Cardiac septum (tissue), 1 donor: ENCODE measurements at regions of chr16 and their contacts with region 1.

Region 1: DNA sequence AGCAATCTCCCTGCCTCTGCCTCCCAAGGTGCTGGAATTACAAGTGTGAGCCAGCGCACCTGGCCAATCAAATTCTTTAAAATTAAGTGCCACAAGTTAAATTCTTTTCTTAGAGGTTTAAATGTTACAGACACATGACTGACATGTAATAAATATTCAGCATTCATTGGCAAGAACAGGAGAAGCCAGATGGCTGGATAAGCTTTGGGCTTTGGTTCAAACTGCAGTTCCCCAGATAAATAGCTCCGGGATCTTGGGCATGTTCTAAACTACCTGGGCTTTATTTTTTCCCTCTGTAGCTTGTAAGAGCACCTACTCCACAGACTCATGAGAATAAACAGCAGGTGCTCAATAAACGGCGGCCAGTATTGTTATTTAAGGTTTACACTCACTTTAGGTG is 34.1 kb downstream of the ABAT start:
- DNase-seq: no peak

Region 2: DNA sequence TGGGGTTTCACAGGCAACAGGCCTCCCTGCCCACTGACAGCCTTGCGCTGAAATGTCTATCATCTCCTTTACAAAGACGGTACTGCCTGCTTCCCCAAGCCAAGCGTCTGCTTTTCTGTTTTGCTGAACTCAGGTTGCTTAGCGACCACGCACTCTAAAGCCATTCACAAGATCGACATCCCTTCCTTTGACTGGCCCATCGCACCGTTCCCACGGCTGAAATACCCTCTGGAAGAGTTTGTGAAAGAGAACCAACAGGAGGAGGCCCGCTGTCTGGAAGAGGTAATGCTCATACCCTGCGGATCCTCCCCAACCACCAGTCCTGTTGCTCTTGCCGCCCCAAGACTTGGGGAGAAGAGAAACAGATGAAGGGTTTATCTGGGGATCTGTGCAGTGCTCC is 60.2 kb after region 1 on chr16:
- intact Hi-C with region 1: loop called (anchors 10 kb)
- DNase-seq: no peak

Region 3: GRCh38 chr16:9159839-9160550 is 451.5 kb after region 1 on chr16:
- intact Hi-C with region 1: no loop called
- DNase-seq: peak; percentile 82